ENCODE measurements at regions of chr11 and their contacts with region 1.

Region 1: DNA sequence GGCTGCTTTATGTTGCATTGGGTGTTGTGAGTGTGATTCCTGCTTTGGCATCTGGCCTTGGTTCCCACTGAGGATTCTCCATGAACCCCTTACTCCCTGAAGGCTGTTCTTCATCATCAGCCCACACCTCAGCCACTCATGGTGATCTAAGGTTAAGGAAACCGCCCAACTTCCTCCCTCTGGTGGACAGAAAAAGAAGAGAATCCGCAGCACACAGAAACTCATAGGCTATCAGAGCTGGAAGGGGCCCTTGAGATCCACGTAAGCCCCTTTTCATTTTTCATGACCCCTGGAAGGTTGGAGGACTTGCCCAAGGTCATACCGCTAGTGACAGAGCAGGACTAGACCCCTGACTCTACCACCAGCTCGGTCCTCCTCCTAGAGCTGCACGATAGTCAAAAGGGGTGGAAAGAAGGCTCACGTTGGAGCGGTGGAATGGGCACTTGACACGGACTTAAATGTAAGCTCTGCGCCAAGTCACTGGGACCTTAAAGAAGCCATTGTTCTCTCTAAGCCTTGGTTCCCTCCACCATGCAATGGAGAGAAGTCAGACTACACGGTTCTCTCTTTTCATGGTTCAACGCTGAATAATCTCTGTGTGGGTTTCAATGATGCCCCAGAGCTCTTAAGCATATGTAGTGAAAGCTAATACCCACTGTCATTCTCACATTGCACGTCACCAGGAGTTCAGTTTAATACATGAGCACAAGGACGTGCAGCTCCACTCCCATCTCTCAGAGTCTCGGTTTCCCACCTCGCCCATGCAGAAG is 83.6 kb upstream of the CRTAM start:
- DNase-seq: peak; percentile 65
- ATAC-seq: no peak
- H3K4me3 ChIP-seq: no peak overlapping the region
- H3K4me3 Mint-ChIP-seq: no peak overlapping the region
- H3K27ac ChIP-seq: no peak overlapping the region
- H3K27ac Mint-ChIP-seq: no peak overlapping the region
- H3K4me1 ChIP-seq: peaks cover 17 to 28% of the 10 kb centered on the region in 2 donors
- H3K4me1 Mint-ChIP-seq: peaks cover 30% of the 10 kb centered on the region
- H3K27me3 ChIP-seq: peaks cover 0 to 21% (median 4%) of the 10 kb centered on the region in 4 experiments
- H3K27me3 Mint-ChIP-seq: peaks cover 20% of the 10 kb centered on the region
- CTCF ChIP-seq: peak; percentile 71

Region 2: DNA sequence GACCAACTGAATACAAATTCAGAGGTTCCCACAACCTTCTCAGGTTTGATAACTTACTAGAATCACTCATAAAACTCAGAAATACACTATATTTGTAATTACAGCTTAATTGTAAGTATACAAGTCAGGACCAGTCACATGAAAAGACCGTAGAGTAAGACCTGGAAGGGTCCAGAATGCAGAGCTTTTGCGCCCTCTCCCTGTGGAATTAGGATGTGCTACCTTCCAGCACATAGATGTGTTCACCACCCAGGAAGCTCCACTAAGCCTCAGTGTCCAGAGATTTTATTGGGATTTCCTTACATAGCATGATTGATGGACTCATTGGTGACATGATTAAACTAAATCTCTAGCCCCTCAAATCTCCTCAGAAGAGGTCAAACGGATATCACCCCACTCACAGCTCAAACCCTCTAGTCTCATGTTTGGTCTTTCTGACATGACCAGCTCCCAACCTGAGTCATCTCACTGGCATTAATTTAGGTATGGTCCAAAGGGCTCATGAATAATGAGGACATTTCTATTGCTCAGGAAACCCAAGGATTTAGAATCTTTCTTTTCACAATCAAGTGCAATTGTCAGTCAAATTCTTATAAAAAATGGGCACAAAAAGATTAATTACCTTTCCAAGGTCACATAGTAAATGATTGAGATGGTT is 176.4 kb before region 1 on chr11:
- CTCF ChIA-PET with region 1: interaction called, 44 read pairs
- POLR2A ChIA-PET with region 1: no interaction called
- intact Hi-C with region 1: loop called (anchors 1 kb)
- DNase-seq: no peak
- ATAC-seq: no peak
- H3K4me3 ChIP-seq: no peak overlapping the region
- H3K4me3 Mint-ChIP-seq: no peak overlapping the region
- H3K27ac ChIP-seq: no peak overlapping the region
- H3K27ac Mint-ChIP-seq: no peak overlapping the region
- H3K4me1 ChIP-seq: peaks cover 6 to 9% of the 10 kb centered on the region in 2 donors
- H3K4me1 Mint-ChIP-seq: peaks cover 13% of the 10 kb centered on the region
- H3K27me3 ChIP-seq: no peaks in the 10 kb centered on the region
- H3K27me3 Mint-ChIP-seq: peaks cover 7% of the 10 kb centered on the region
- CTCF ChIP-seq: no peak

Region 3: DNA sequence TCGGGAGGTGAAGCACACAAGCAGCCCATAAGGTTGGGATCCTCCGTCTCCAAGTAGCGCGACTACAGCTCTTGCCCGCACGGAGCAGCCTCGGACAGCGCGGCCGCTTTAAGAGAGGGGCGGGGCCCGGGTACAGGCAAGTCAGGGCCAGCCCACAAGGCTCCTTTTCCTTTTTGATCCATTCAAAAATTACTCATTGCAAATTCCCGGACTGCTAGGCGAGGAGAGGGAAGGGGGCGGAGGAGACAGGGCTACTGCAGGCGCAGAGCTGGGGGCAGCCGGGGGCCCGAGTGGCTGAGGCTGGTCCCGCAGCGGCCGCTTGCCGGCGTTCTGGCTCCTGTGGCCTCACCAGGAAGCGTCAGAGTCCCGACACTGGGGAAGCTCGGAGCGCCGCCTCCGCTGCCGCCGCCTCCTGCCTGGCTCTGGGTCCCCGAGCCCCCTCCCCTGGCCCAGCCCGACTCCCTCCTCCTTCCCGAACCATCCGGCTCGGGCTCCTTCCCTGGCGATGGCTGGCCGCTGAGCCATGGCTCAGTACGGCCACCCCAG is 99.1 kb before region 1 on chr11 and contains the start of gene UBASH3B:
- CTCF ChIA-PET with region 1: interaction called, 92 read pairs
- POLR2A ChIA-PET with region 1: interaction called, 7 read pairs
- intact Hi-C with region 1: loop called (anchors 1 kb)
- DNase-seq: peak; percentile 75
- ATAC-seq: peak; percentile 76
- H3K4me3 ChIP-seq: peak within 1 kb of the TSS; percentile 53 to 86 (median 75)
- H3K4me3 Mint-ChIP-seq: peak within 1 kb of the TSS; percentile 91
- H3K27ac ChIP-seq: peak within 1 kb of the TSS; percentile 19 to 62
- H3K27ac Mint-ChIP-seq: peak within 1 kb of the TSS; percentile 71
- H3K4me1 ChIP-seq: peaks cover 21 to 25% of the 10 kb centered on the region in 2 donors
- H3K4me1 Mint-ChIP-seq: peaks cover 31% of the 10 kb centered on the region
- H3K27me3 ChIP-seq: peaks cover 0 to 24% (median 13%) of the 10 kb centered on the region in 4 experiments
- H3K27me3 Mint-ChIP-seq: peaks cover 21% of the 10 kb centered on the region
- CTCF ChIP-seq: no peak
- total RNA-seq, gene UBASH3B: 3.6 and 4.2 TPM in 2 replicates

Region 4: GRCh38 chr11:122697636-122698167 is 57.0 kb before region 1 on chr11:
- CTCF ChIA-PET with region 1: interaction called, 41 read pairs
- POLR2A ChIA-PET with region 1: no interaction called
- intact Hi-C with region 1: loop called (anchors 2 kb)
- DNase-seq: peak; percentile 71
- ATAC-seq: peak; percentile 90
- H3K4me3 ChIP-seq: peak overlapping the region in 4 of 5 experiments; percentile 3 to 34 (median 18)
- H3K4me3 Mint-ChIP-seq: peak overlapping the region; percentile 83
- H3K27ac ChIP-seq: peak overlapping the region; percentile 14 to 74
- H3K27ac Mint-ChIP-seq: peak overlapping the region; percentile 81
- H3K4me1 ChIP-seq: peaks cover 51 to 59% of the 10 kb centered on the region in 2 donors
- H3K4me1 Mint-ChIP-seq: peaks cover 60% of the 10 kb centered on the region
- H3K27me3 ChIP-seq: peaks cover 0 to under 1% (median 0%) of the 10 kb centered on the region in 4 experiments
- H3K27me3 Mint-ChIP-seq: no peaks in the 10 kb centered on the region
- CTCF ChIP-seq: no peak

Region 5: DNA sequence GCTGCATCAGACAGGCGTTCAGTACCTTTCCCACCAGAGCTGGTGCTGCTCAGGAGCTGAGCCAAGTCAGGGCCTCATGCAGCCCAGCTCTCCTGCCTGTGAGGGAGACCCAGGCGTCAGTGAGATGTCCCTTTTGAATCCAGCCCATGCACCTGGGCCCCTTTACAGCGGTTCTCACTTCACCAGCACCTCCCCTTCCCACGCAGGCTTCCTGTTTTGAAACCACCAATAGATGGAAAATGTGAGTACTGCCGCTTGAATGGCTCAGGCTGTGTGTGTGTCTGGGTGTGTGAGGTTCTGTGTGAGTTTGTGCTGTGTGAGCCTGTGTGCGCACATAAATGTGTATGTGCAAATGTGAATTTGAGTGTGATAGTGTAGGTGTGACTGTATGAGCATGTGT is 10.8 kb before region 1 on chr11:
- CTCF ChIA-PET with region 1: interaction called, 56 read pairs
- POLR2A ChIA-PET with region 1: interaction called, 3 read pairs
- intact Hi-C with region 1: loop called (anchors 1 kb)
- DNase-seq: peak; percentile 79
- ATAC-seq: peak; percentile 58
- H3K4me3 ChIP-seq: peak overlapping the region in 1 of 5 experiments; percentile 22
- H3K4me3 Mint-ChIP-seq: no peak overlapping the region
- H3K27ac ChIP-seq: peak overlapping the region; percentile 25 to 26
- H3K27ac Mint-ChIP-seq: no peak overlapping the region
- H3K4me1 ChIP-seq: peaks cover 46 to 63% of the 10 kb centered on the region in 2 donors
- H3K4me1 Mint-ChIP-seq: peaks cover 10% of the 10 kb centered on the region
- H3K27me3 ChIP-seq: peaks cover 0 to 12% (median 2%) of the 10 kb centered on the region in 4 experiments
- H3K27me3 Mint-ChIP-seq: no peaks in the 10 kb centered on the region
- CTCF ChIP-seq: no peak

Region 6: GRCh38 chr11:122796128-122796717 is 41.5 kb after region 1 on chr11:
- CTCF ChIA-PET with region 1: interaction called, 24 read pairs
- POLR2A ChIA-PET with region 1: no interaction called
- intact Hi-C with region 1: no loop called
- DNase-seq: peak; percentile 75
- ATAC-seq: peak; percentile 93
- H3K4me3 ChIP-seq: no peak overlapping the region
- H3K4me3 Mint-ChIP-seq: no peak overlapping the region
- H3K27ac ChIP-seq: no peak overlapping the region
- H3K27ac Mint-ChIP-seq: no peak overlapping the region
- H3K4me1 ChIP-seq: no peaks in the 10 kb centered on the region
- H3K4me1 Mint-ChIP-seq: peaks cover 4% of the 10 kb centered on the region
- H3K27me3 ChIP-seq: no peaks in the 10 kb centered on the region
- H3K27me3 Mint-ChIP-seq: no peaks in the 10 kb centered on the region
- CTCF ChIP-seq: peak; percentile 96

Region 7: DNA sequence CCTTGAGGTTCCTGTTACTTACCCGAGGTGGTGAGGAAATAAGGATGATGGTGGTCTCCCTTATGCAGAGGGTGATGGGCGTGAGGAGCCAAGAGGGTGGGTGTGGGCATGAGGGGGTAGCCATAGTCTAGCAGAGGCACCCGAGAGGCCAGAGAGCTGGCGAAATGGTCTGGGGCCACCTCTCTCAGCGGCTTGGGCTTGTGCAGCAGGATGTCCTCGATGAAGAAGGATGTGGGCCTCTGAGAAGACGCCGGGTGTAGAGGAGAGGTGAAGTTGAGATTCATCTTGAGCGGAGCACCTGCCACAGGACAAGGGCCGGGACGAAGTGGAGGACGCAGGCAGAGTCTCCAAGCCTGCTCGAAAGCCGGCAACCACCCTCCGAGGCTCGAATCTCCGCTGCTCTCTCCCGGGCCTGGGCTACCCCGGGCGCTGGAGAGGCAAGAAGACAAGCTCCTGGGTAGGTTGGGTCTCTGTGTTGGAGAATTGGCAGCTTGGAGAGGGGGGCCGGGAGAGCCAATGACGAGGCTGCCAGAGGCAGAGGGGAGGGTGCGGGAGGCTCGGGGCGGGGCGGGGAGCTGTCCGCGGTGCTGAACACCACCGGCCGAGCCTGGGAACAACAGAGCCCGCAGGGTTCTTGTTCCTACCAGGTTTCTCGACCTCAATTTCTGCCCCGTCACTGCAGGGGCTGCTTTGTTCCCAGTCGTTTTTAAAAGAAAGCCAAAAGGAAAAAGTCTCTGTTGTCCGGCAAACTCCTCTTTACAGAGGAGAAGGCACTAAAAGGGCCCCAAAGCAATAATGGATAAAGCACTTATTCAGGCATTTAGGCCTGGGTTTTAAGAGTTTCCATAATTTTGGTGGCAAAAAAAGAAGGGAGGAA is 226.9 kb after region 1 on chr11 and contains the start of gene BSX:
- CTCF ChIA-PET with region 1: no interaction called
- POLR2A ChIA-PET with region 1: no interaction called
- intact Hi-C with region 1: no loop called
- DNase-seq: peak; percentile 49
- ATAC-seq: peak; percentile 31
- H3K4me3 ChIP-seq: no peak within 1 kb of the TSS
- H3K4me3 Mint-ChIP-seq: no peak within 1 kb of the TSS
- H3K27ac ChIP-seq: no peak within 1 kb of the TSS
- H3K27ac Mint-ChIP-seq: peak within 1 kb of the TSS; percentile 3
- H3K4me1 ChIP-seq: peaks cover 26 to 45% of the 10 kb centered on the region in 2 donors
- H3K4me1 Mint-ChIP-seq: peaks cover 27% of the 10 kb centered on the region
- H3K27me3 ChIP-seq: peaks cover 0 to 87% (median 74%) of the 10 kb centered on the region in 4 experiments
- H3K27me3 Mint-ChIP-seq: peaks cover 79% of the 10 kb centered on the region
- CTCF ChIP-seq: no peak
- total RNA-seq, gene BSX: not detected in 2 replicates